ENCODE measurements at regions of chr17 and their contacts with region 1.

Region 1: DNA sequence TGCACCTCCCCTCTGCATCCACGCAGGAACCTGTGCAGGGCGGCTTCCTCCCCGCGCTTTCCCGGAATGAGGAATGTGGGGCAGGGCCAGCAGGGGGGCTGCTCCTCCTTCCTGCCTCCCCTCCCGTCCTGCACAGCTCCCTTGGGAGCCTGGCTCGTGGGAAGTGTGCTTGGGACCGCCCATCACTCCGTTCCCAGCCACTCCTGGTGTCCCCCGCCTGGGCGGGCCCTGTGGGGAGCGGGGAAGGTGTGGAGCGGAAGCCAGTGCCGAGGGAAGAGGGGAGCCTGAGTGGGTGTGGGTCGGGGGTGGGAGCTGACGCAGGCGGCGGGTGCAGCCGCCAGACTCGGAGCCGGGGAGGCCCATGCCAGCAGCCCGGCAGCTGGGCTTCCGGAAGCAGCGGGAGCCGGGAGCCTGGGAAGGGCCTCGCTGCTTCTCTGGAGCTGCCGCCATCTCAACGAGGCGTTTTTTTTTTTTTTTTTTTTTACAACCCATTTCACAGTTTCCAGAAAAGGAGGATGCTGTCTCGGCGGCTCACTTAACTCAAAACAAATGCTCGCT is 24.1 kb downstream of the BAHCC1 start:
- DNase-seq: peak; percentile 92 to 97
- ATAC-seq: peak; percentile 67 to 84
- H3K4me3 ChIP-seq: peak overlapping the region; percentile 38
- H3K27ac ChIP-seq: peak overlapping the region; percentile 98 to 100
- H3K4me1 ChIP-seq: peaks cover 77% of the 10 kb centered on the region
- CTCF ChIP-seq: no peak
- EP300 ChIP-seq: peak; percentile 18 to 36; a peak in 1 of 5 replicates
- POLR2A ChIP-seq: peak; percentile 70
- RAD21 ChIP-seq: no peak; a peak in 1 of 5 replicates

Region 2: GRCh38 chr17:81153340-81153803 is 266.0 kb before region 1 on chr17:
- CTCF ChIA-PET with region 1: no interaction called
- POLR2A ChIA-PET with region 1: no interaction called
- DNase-seq: no peak
- ATAC-seq: no peak
- H3K4me3 ChIP-seq: no peak overlapping the region
- H3K27ac ChIP-seq: no peak overlapping the region
- H3K4me1 ChIP-seq: no peaks in the 10 kb centered on the region
- CTCF ChIP-seq: no peak
- EP300 ChIP-seq: no peak
- POLR2A ChIP-seq: no peak
- RAD21 ChIP-seq: no peak

Region 3: DNA sequence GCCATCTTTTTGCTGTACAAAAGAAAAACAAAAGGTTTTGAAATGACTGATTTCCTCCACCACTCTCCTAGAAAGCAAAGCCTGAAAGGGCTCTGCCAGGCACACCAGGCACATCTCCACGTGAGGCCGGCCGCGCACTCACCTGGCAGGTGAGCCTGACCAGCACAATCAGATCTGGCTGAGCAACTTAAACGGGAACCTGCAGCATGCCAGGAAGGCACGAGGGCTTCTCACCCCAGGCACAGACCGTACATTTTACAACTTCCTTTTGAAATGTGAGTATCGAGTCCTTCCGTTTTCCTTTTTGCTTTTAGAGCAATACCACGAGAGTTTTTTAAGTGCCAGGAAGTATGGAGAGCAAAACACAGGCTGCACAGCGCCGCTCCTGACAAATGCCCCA is 146.8 kb before region 1 on chr17:
- CTCF ChIA-PET with region 1: no interaction called
- POLR2A ChIA-PET with region 1: no interaction called
- DNase-seq: no peak
- ATAC-seq: no peak
- H3K4me3 ChIP-seq: no peak overlapping the region
- H3K27ac ChIP-seq: no peak overlapping the region
- H3K4me1 ChIP-seq: no peaks in the 10 kb centered on the region
- CTCF ChIP-seq: no peak
- EP300 ChIP-seq: no peak
- POLR2A ChIP-seq: no peak
- RAD21 ChIP-seq: no peak

Region 4: DNA sequence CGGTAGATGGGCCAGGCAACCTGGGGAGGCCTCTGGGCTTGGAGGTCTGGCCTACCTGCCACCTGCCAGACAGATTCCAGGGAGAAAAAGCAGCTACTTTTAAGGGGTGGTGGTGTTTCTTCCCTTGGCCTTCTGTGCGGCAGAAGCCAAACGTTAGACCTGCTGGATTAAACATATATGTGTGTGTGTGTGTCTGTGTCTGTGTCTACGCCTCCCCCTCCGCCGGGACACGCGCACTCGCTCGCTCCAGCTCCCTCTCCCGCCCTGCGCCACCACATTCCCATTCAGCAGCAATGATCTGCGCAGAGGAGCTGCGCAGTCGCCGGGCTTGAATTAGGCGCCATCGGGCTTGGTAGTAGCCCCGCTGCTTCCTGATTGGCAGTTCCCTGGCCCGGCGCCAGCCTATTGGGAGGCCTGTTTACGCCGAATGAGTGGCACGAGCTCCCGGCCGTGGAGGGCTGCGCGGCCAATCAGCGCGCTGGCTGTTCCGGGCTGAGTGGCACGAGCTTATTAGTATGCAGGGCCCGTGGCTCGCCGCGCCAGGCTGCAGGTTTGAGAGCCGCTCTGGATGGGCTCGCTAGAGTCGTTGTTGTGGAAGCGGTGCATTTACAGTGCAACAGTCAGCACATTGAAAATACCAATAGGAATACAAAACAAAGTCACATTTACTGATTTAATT is 24.3 kb before region 1 on chr17 and contains the start of gene BAHCC1:
- CTCF ChIA-PET with region 1: interaction called, 23 read pairs
- POLR2A ChIA-PET with region 1: interaction called, 107 read pairs
- DNase-seq: peak; percentile 99 to 100
- ATAC-seq: peak; percentile 65 to 85
- H3K4me3 ChIP-seq: peak within 1 kb of the TSS; percentile 76
- H3K27ac ChIP-seq: peak within 1 kb of the TSS; percentile 94 to 98
- H3K4me1 ChIP-seq: peaks cover 40% of the 10 kb centered on the region
- CTCF ChIP-seq: no peak
- EP300 ChIP-seq: no peak
- POLR2A ChIP-seq: peak; percentile 79
- RAD21 ChIP-seq: no peak
- polyA plus RNA-seq, gene BAHCC1: 2.1 and 2.6 TPM in 2 replicates

Region 5: DNA sequence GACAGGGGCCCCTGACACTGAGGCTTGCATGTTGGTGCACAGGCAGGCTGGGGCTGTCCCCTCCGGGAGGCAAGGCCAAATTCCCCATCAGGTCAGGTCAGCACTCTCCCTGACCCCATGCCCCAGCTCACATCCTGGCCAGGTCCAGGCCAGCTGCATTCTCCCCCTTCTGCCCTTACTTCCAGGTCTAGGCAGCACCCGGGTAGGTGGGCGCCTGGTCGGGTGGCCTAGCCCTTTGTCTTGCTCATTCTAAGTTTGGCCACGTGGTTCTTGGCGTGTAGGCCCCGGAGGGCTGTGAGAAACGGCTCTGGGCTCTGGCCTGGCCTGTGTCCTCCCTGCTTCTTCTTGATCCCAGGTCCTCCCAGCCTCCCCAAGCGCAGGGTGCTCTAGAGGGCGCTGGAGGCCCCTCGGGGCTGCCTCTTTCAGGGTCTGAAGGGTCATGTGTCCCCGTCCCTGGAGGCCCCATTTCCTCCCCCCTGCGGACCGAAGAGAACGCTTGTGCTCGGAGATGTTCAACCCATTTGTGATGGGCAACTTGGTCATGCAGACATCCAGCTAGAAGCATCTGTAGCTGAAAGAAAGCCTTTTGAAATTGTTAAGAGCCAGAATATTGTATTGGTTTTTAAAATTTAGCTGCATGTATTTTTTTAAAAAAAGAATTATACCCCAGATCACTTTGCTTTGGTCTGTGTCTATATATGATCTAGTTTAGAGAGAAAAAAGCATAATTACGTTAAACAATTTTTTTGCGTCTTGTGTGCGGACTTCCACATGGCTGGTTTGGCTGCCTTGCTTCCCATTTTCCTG is 17.5 kb before region 1 on chr17:
- CTCF ChIA-PET with region 1: interaction called, 25 read pairs
- POLR2A ChIA-PET with region 1: interaction called, 107 read pairs
- DNase-seq: peak; percentile 69 to 81
- ATAC-seq: peak in 1 of 2 experiments; percentile 54; a peak in 3 of 6 replicates
- H3K4me3 ChIP-seq: no peak overlapping the region
- H3K27ac ChIP-seq: peak overlapping the region; percentile 16 to 98; a peak in 3 of 6 replicates
- H3K4me1 ChIP-seq: peaks cover 49% of the 10 kb centered on the region
- CTCF ChIP-seq: peak; percentile 55
- EP300 ChIP-seq: no peak
- POLR2A ChIP-seq: no peak
- RAD21 ChIP-seq: peak; percentile 64 to 67

Region 6: DNA sequence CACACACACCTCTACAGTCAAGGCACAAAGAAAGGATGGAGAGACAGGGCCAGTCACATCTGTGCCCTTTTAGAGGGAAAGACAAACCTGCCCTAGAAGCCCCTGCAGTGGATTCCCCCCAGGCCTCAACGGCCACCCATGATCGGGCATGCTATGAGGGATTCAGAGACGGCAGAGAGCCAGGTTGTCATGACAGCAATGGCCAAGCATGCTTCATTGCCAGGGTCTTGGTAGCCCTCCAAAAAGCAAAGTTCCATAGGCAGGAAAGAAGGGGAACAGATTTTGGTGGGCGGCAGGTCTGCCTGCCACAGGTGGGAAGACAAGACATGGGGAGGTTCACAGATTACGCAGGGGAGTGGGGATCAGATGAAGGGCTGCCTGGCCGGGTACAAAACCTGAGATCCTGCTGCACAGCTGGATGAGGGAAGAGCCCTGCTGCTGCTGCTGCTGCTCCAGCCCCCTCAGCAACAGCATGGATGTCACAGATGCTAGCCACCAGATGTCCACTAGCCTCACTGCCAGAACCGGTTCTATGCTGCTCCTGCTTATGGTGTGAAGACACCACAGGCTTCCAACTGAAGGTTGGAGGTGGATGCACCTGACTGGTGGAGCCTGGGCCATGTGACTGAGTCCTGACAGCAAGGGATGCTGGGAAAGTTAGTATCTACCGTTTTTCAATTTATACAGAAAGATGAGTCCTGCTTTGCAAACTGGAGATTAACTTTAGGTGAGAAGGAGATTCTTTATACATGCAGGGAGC is 75.4 kb after region 1 on chr17:
- CTCF ChIA-PET with region 1: no interaction called
- POLR2A ChIA-PET with region 1: interaction called, 10 read pairs
- DNase-seq: peak in 1 of 2 experiments; percentile 61
- ATAC-seq: peak in 1 of 2 experiments; percentile 43; a peak in 3 of 6 replicates
- H3K4me3 ChIP-seq: no peak overlapping the region
- H3K27ac ChIP-seq: no peak overlapping the region
- H3K4me1 ChIP-seq: peaks cover 28% of the 10 kb centered on the region
- CTCF ChIP-seq: no peak
- EP300 ChIP-seq: no peak
- POLR2A ChIP-seq: no peak
- RAD21 ChIP-seq: no peak